T-cell (primary cell): ENCODE measurements at regions of chr2 and their contacts with region 1.

Region 1: GRCh38 chr2:60998628-60999545 is 18.6 kb upstream of the PEX13 start:
- DNase-seq: peak in 18 of 35 experiments; percentile 2 to 78 (median 19)
- ATAC-seq: peak; percentile 54 to 69 (median 56)
- H3K4me3 ChIP-seq: no peak overlapping the region
- H3K4me3 Mint-ChIP-seq: no peak overlapping the region
- H3K27ac ChIP-seq: no peak overlapping the region
- H3K27ac Mint-ChIP-seq: no peak overlapping the region
- H3K4me1 ChIP-seq: no peaks in the 10 kb centered on the region
- H3K4me1 Mint-ChIP-seq: peaks cover 0 to 2% (median 0%) of the 10 kb centered on the region in 3 donors
- H3K27me3 ChIP-seq: no peaks in the 10 kb centered on the region
- H3K27me3 Mint-ChIP-seq: no peaks in the 10 kb centered on the region

Region 2: DNA sequence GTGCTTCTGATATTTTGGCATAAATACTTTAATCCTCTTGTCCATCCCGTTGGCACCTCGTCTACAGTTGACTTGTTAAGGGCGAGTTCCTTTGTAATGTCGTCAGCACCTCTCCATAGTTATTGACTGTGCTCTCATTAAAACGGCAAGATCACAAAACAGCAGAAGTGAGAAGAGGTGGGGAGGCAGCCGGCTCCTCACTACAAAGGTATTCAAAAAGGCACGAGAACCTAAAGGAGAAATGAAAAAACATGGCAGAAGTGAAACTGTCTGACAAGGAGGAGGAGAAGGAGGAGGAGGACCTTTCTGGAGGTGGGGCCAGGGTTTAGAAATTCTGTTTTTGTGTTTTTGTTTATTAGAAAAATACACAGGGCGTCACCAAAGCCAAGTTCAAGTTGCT is 681.0 kb before region 1 on chr2:
- CTCF ChIA-PET with region 1: no interaction called
- POLR2A ChIA-PET with region 1: no interaction called
- DNase-seq: no peak
- ATAC-seq: no peak
- H3K4me3 ChIP-seq: no peak overlapping the region
- H3K4me3 Mint-ChIP-seq: no peak overlapping the region
- H3K27ac ChIP-seq: no peak overlapping the region
- H3K27ac Mint-ChIP-seq: no peak overlapping the region
- H3K4me1 ChIP-seq: no peaks in the 10 kb centered on the region
- H3K4me1 Mint-ChIP-seq: peaks cover 0 to 3% (median 0%) of the 10 kb centered on the region in 3 donors
- H3K27me3 ChIP-seq: no peaks in the 10 kb centered on the region
- H3K27me3 Mint-ChIP-seq: peaks cover 4 to 5% of the 10 kb centered on the region in 2 donors

Region 3: DNA sequence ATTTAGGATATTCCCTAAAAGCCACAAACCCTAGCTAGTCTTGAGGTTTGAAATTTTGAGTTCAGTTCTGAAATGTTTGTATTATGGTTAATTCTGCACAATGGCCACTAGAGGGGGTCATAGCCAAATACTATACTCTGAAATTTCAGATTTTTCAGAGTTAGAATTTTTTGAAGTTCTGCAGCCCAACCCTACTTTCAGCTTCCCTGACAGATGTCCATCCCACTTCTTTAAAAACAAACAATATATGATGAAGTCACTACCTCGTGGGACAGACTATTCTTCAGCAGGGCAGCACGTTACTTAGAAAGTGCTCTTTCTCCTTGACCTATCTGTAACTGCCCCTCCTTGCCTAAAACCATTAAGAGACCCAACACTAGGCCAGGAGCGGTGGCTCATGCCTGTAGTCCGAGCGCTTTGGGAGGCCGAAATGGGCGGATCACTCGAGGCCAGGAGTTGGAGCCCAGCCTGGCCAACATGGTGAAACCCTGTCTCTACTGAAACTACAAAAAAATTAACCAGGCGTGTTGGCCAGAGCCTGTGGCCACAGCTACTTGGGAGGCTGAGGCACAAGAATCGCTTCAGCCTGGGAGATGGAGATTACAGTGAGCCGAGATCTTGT is 291.0 kb before region 1 on chr2:
- CTCF ChIA-PET with region 1: interaction called, 8 to 31 read pairs
- POLR2A ChIA-PET with region 1: no interaction called
- DNase-seq: peak in 4 of 35 experiments; percentile 4 to 60 (median 10)
- ATAC-seq: peak in 1 of 4 experiments; percentile 36
- H3K4me3 ChIP-seq: no peak overlapping the region
- H3K4me3 Mint-ChIP-seq: no peak overlapping the region
- H3K27ac ChIP-seq: no peak overlapping the region
- H3K27ac Mint-ChIP-seq: no peak overlapping the region
- H3K4me1 ChIP-seq: no peaks in the 10 kb centered on the region
- H3K4me1 Mint-ChIP-seq: no peaks in the 10 kb centered on the region
- H3K27me3 ChIP-seq: peaks cover 0 to 4% of the 10 kb centered on the region in 2 experiments
- H3K27me3 Mint-ChIP-seq: peaks cover 5 to 9% of the 10 kb centered on the region in 2 donors

Region 4: GRCh38 chr2:60793169-60793568 is 205.7 kb before region 1 on chr2:
- CTCF ChIA-PET with region 1: interaction called, 7 to 14 read pairs
- POLR2A ChIA-PET with region 1: no interaction called
- DNase-seq: no peak
- ATAC-seq: no peak
- H3K4me3 ChIP-seq: no peak overlapping the region
- H3K4me3 Mint-ChIP-seq: no peak overlapping the region
- H3K27ac ChIP-seq: no peak overlapping the region
- H3K27ac Mint-ChIP-seq: no peak overlapping the region
- H3K4me1 ChIP-seq: peaks cover 0 to 3% of the 10 kb centered on the region in 2 experiments
- H3K4me1 Mint-ChIP-seq: peaks cover 6 to 16% (median 8%) of the 10 kb centered on the region in 3 donors
- H3K27me3 ChIP-seq: no peaks in the 10 kb centered on the region
- H3K27me3 Mint-ChIP-seq: no peaks in the 10 kb centered on the region

Region 5: GRCh38 chr2:60806988-60807681 is 191.8 kb before region 1 on chr2:
- CTCF ChIA-PET with region 1: interaction called, 4 to 41 read pairs
- POLR2A ChIA-PET with region 1: no interaction called
- DNase-seq: peak in 24 of 35 experiments; percentile 5 to 69 (median 20)
- ATAC-seq: peak; percentile 59 to 74 (median 70)
- H3K4me3 ChIP-seq: no peak overlapping the region
- H3K4me3 Mint-ChIP-seq: peak overlapping the region; percentile 8 to 34 (median 26)
- H3K27ac ChIP-seq: peak overlapping the region; percentile 68
- H3K27ac Mint-ChIP-seq: peak overlapping the region; percentile 88 to 92
- H3K4me1 ChIP-seq: peaks cover 17 to 29% of the 10 kb centered on the region in 2 experiments
- H3K4me1 Mint-ChIP-seq: peaks cover 41 to 53% (median 47%) of the 10 kb centered on the region in 3 donors
- H3K27me3 ChIP-seq: no peaks in the 10 kb centered on the region
- H3K27me3 Mint-ChIP-seq: no peaks in the 10 kb centered on the region

Region 6: DNA sequence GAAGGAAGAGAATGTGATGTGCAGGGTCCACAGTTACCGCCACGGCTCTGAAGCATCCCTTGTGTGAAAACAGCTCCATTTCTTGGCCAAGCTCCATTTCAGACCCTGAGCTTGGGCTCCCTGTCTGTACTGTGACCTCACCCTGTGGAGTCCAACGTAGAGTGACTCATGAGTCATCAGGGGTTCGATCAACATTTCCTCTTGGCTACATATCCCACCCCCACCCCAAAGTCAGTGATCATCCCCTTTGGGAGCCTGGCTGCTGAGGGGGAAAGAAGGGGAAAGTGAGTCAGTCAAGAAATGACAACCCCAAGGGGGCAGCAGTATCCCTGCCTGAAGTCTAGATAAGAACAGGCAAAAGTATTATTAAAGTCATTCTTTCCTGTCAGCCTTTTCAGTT is 180.6 kb before region 1 on chr2:
- CTCF ChIA-PET with region 1: interaction called, 3 to 12 read pairs
- POLR2A ChIA-PET with region 1: no interaction called
- DNase-seq: peak in 3 of 35 experiments; percentile 9 to 51 (median 36)
- ATAC-seq: no peak
- H3K4me3 ChIP-seq: no peak overlapping the region
- H3K4me3 Mint-ChIP-seq: peak overlapping the region in 1 of 3 donors; percentile 24
- H3K27ac ChIP-seq: peak overlapping the region; percentile 87
- H3K27ac Mint-ChIP-seq: peak overlapping the region; percentile 28 to 57
- H3K4me1 ChIP-seq: peaks cover 20 to 35% of the 10 kb centered on the region in 2 experiments
- H3K4me1 Mint-ChIP-seq: peaks cover 37 to 50% (median 40%) of the 10 kb centered on the region in 3 donors
- H3K27me3 ChIP-seq: no peaks in the 10 kb centered on the region
- H3K27me3 Mint-ChIP-seq: no peaks in the 10 kb centered on the region

Region 7: DNA sequence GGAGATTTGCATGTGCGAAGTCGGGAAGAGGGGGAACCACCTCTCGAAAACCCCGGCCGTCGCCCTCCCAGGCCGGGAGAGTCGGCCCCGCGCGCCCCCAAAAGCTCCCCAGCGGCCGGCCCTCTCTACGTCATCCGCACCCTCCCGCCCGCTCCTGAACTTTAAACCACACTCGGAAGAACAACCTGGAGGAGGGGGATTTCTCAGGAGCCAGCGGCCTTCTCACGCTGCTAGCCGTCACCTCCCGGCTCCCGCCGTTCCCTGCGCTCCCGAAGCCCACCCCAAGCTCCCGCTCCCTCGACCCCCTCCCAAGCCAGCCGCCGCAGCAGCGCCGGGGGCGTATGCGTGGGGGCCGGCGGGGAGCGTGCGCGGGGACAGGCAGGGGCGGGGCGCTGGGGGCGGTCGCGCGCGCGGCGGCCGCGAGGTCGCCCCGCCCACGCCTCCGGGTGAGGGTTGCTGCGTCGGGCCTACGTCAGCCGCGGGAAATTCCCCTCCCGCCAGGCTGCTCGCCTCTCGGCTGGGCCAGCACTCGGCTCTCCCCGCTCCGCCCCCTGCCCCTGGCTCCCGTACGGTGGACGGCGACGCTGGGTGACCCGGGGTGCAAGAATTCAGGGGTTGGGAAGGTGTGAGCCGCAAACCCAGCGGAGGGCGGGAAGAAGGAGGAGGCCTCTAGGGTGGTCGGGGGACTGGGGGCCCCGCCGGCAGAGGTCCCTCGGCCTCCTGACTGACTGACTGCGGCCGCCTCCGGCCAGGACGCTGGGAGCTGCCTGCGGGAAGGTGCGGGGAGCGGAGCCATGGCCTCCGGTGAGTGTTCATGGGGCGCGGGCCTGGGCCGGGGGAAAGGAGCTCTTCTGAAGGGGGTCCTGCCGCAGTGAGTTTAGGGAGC is 117.6 kb before region 1 on chr2 and contains the start of gene REL:
- CTCF ChIA-PET with region 1: interaction called in 1 of 2 experiments, 10 read pairs
- POLR2A ChIA-PET with region 1: no interaction called
- DNase-seq: peak; percentile 72 to 96 (median 86)
- ATAC-seq: peak; percentile 85 to 93 (median 91)
- H3K4me3 ChIP-seq: peak within 1 kb of the TSS; percentile 89 to 96
- H3K4me3 Mint-ChIP-seq: peak within 1 kb of the TSS; percentile 86 to 92 (median 90)
- H3K27ac ChIP-seq: peak within 1 kb of the TSS; percentile 100
- H3K27ac Mint-ChIP-seq: peak within 1 kb of the TSS; percentile 87 to 93
- H3K4me1 ChIP-seq: peaks cover 3 to 22% of the 10 kb centered on the region in 2 experiments
- H3K4me1 Mint-ChIP-seq: peaks cover 35 to 37% (median 36%) of the 10 kb centered on the region in 3 donors
- H3K27me3 ChIP-seq: no peaks in the 10 kb centered on the region
- H3K27me3 Mint-ChIP-seq: no peaks in the 10 kb centered on the region
- total RNA-seq, gene REL: 19.9 to 69.9 (median 25.1) TPM